Left ventricle myocardium inferior (tissue), 1 donor: ENCODE measurements at regions of chr7 and their contacts with region 1.

Region 1: GRCh38 chr7:67671006-67671548 is 674.4 kb downstream of the TYW1 start:
- DNase-seq: no peak
- H3K4me3 ChIP-seq: no peak overlapping the region
- H3K27ac ChIP-seq: no peak overlapping the region
- H3K4me1 ChIP-seq: no peaks in the 10 kb centered on the region
- H3K27me3 ChIP-seq: peaks cover 13% of the 10 kb centered on the region
- CTCF ChIP-seq: no peak

Region 2: GRCh38 chr7:68433462-68434070 is 762.5 kb after region 1 on chr7:
- intact Hi-C with region 1: loop called (anchors 10 kb)
- DNase-seq: no peak
- H3K4me3 ChIP-seq: no peak overlapping the region
- H3K27ac ChIP-seq: no peak overlapping the region
- H3K4me1 ChIP-seq: peaks cover 14% of the 10 kb centered on the region
- H3K27me3 ChIP-seq: no peaks in the 10 kb centered on the region
- CTCF ChIP-seq: no peak